ENCODE measurements at regions of chr2 and their contacts with region 1.

Region 1: DNA sequence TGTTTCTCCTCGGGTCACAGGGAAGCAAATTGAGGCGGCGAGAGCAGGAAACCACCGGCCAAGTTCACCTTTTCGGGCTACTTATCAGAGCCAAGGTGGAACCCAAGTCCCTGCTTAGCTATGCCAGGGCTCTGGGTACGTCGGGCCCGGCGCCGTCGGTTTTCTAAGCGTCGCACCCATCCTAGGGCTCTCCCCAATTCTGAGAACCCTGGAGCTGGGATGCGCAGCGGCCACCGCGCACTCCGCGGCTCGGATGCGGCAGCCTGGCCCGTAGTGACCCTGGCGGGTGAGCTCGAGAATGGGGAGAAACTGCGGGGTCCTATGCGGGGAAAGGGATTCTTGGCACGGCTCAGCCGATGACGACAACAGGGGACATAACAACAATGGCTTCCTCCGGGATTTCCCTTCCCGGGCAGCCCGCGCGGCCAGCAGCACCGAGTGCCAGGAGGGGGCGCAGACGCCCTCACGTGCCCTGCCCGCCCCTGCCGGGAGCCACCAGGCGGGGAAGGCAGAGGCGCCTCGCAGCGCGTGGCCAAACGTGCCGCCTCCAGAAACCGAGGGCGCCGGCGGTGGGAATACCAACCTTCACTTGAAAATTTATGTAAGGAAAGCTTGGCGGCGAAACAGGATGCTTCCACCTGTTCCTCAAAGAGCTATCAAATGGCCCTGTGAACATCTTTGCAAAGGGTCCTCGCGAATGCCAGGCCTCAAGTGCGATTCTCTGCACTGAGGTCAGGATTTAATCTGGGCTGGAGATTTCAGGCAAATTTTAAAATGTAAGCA is 2.1 kb upstream of the SLC30A3 start:
- H3K4me3 ChIP-seq: peak overlapping the region; percentile 25
- H3K27ac ChIP-seq: no peak overlapping the region; the same call in 1 of the 2 replicates
- H3K4me1 ChIP-seq: peaks cover 9% of the 10 kb centered on the region
- CTCF ChIP-seq: peak; percentile 98

Region 2: GRCh38 chr2:26720322-26721166 is 544.4 kb before region 1 on chr2:
- CTCF ChIA-PET with region 1: no interaction called
- POLR2A ChIA-PET with region 1: no interaction called
- H3K4me3 ChIP-seq: no peak overlapping the region
- H3K27ac ChIP-seq: no peak overlapping the region
- H3K4me1 ChIP-seq: peaks cover 6% of the 10 kb centered on the region
- CTCF ChIP-seq: no peak

Region 3: DNA sequence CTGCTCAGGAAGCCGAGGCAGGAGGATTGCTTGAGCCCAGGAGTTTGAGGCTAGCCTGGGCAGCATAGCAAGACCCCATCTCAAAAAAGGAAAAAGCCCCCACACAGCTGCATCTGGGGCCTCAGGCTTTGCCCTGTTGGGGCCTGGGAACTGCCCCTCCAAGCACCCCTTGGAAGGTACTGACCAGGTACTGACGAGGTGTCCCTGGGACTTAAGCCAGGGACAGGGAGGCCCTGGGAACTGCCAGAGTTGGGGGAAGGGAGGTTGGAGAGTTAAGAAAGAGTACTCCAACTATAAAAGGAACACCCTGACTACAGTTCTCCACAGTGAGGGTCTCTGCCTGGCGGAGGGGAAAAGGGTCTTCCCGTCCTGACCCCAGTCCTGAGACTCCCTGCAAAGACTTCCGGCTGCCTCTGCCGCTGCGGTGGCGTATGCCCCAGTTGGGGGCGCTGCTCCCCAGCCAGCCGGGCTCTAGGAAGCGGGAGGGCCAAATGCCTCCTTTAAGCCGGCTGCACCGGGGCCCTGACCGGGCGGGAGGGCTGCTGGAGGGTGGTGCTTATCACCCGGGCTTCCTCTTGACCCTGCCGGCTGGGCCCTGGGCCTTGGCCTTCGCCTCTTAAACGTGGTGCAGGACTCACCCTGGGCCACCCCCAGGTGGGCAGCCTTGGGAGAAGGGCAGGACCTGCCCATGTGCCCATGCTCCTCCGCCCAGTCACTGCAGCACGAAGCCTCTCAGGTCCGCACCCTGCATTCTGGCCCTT is 14.9 kb before region 1 on chr2:
- CTCF ChIA-PET with region 1: interaction called, 13 read pairs
- POLR2A ChIA-PET with region 1: no interaction called
- H3K4me3 ChIP-seq: no peak overlapping the region
- H3K27ac ChIP-seq: no peak overlapping the region
- H3K4me1 ChIP-seq: 0 out of 2 replicates have a peak, but pooled peaks cover 4% of the 10 kb centered on the region
- CTCF ChIP-seq: peak; percentile 79

Region 4: DNA sequence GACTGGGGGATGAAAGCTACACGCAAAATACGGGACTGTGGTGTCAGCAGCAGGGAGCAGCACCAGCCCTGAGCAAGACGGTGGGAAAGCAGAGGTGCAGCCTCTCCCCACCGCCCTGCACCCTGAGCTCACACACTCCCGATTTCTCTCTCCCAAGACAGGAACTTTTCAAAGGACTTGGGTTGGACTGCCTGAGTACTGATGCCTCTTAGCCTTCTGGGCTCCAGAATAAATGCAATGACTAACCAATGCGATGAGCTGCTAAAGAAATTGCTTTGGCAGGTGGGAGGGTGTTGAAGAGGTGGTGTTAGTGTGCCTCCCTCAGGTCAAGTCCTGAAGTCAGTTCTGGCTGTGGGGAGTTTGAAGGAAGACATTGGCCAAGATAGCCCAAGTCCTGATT is 26.9 kb after region 1 on chr2:
- CTCF ChIA-PET with region 1: interaction called, 21 read pairs
- POLR2A ChIA-PET with region 1: interaction called, 4 read pairs
- H3K4me3 ChIP-seq: no peak overlapping the region
- H3K27ac ChIP-seq: no peak overlapping the region
- H3K4me1 ChIP-seq: peaks cover 13% of the 10 kb centered on the region
- CTCF ChIP-seq: no peak